CD14-positive monocyte (primary cell): ENCODE measurements at regions of chr15 and their contacts with region 1.

Region 1: DNA sequence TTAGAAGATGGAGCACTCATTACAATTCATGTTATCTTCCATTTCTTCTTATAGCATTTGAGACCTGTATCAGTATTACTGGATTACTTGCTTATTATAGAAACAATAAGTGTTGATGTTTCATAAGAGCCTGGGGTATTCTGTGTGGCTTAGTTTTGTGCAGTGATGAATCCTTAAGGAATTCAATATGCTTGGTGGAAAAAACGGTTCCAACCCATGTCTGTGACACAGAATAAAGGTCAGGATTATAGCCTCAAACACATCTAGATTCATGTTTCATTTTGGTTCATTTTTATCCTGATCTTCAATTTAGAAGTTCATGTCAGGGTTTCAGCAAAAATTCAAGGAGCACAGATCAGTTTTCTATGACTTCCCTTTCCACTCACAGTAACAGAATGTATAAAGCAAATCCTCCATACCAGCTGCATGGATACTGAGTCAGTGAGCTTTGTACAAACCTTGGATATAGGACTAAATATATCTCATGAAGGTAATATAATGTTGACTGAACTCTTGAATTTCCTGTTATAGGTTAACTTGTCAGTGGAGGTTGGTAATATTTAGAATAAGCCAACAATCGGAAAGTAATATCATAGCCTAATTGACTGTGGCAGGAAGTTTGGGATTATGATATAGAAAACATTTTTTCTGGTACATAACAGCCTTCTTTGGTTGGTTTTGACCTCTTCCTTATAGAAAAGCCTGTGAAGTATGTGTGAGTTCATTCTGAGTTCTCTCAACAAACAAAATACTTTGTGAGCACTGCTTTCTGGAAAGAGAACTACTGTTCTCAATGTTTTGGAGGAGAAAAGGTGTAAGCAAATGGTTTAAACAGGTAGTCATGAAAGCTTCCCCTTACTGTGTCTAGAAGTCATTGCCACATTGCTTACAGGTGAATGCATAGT is 218.2 kb upstream of the TPM1 start:
- DNase-seq: no peak
- H3K4me3 ChIP-seq: no peak overlapping the region
- H3K4me3 Mint-ChIP-seq: no peak overlapping the region
- H3K27ac ChIP-seq: no peak overlapping the region
- H3K27ac Mint-ChIP-seq: no peak overlapping the region
- H3K4me1 ChIP-seq: no peaks in the 10 kb centered on the region
- H3K4me1 Mint-ChIP-seq: no peaks in the 10 kb centered on the region
- H3K27me3 ChIP-seq: no peaks in the 10 kb centered on the region
- H3K27me3 Mint-ChIP-seq: peaks cover 1 to 2% (median 2%) of the 10 kb centered on the region in 3 donors
- CTCF ChIP-seq: no peak

Region 2: DNA sequence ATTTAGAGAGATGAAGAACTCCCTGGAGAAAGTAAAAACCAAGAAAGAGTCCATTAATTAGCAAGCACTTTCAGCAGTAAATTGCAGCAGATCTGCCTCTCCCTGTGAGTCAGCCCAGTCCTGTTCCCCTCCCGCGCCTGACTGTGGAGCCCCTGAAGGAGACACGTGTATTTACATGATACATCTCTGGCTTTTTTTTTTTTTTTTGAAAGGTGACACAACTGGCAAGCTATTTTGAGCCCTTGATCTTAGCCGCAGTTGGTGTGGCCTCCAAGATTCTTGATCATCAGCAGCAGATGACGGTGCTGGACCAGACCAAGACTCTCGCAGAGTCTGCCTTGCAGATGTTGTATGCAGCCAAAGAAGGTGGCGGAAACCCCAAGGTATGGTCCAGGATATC is 53.6 kb before region 1 on chr15:
- intact Hi-C with region 1: loop called in 1 of 2 experiments (anchors 5 kb)
- DNase-seq: no peak
- H3K4me3 ChIP-seq: no peak overlapping the region
- H3K4me3 Mint-ChIP-seq: no peak overlapping the region
- H3K27ac ChIP-seq: no peak overlapping the region
- H3K27ac Mint-ChIP-seq: no peak overlapping the region
- H3K4me1 ChIP-seq: no peaks in the 10 kb centered on the region
- H3K4me1 Mint-ChIP-seq: no peaks in the 10 kb centered on the region
- H3K27me3 ChIP-seq: no peaks in the 10 kb centered on the region
- H3K27me3 Mint-ChIP-seq: peaks cover 0 to 4% (median 2%) of the 10 kb centered on the region in 3 donors
- CTCF ChIP-seq: no peak